A549 (cell line): ENCODE measurements at regions of chr2 and their contacts with region 1.

Region 1: GRCh38 chr2:46125798-46126197 is 171.4 kb upstream of the EPAS1 start:
- DNase-seq: no peak
- ATAC-seq: no peak
- H3K4me3 ChIP-seq: no peak overlapping the region
- H3K27ac ChIP-seq: peak overlapping the region in 1 of 2 experiments; percentile 15; a peak in 2 of 6 replicates
- H3K4me1 ChIP-seq: peaks cover 26% of the 10 kb centered on the region
- CTCF ChIP-seq: no peak
- EP300 ChIP-seq: no peak
- POLR2A ChIP-seq: no peak
- RAD21 ChIP-seq: no peak

Region 2: DNA sequence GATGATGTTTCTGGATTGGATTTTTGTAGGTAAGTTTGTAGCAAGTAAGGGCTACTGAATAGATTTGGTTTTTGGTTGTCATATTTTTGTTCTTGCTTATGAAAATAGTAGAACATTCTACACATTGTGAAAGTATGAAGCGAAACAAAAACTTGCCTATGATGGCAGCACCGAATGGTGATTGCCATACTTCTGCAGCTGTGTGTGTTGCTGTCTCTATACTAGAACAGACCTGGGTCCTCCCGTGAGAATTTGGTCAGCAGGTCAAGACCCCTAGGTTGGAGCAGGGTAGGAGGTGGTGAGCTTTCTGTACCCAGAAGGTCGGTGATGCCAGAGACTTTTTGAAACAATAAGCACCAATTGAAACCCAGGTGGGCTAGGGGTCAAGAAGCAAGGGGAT is 151.7 kb before region 1 on chr2:
- CTCF ChIA-PET with region 1: no interaction called
- POLR2A ChIA-PET with region 1: no interaction called
- DNase-seq: no peak
- ATAC-seq: no peak
- H3K4me3 ChIP-seq: no peak overlapping the region
- H3K27ac ChIP-seq: no peak overlapping the region
- H3K4me1 ChIP-seq: no peaks in the 10 kb centered on the region
- CTCF ChIP-seq: no peak
- EP300 ChIP-seq: no peak
- POLR2A ChIP-seq: no peak
- RAD21 ChIP-seq: no peak

Region 3: GRCh38 chr2:46142546-46143428 is 17.0 kb after region 1 on chr2:
- CTCF ChIA-PET with region 1: interaction called, 16 read pairs
- POLR2A ChIA-PET with region 1: no interaction called
- DNase-seq: peak in 1 of 2 experiments; percentile 31
- ATAC-seq: peak; percentile 65 to 83; a peak in 5 of 6 replicates
- H3K4me3 ChIP-seq: no peak overlapping the region
- H3K27ac ChIP-seq: peak overlapping the region; percentile 49 to 82
- H3K4me1 ChIP-seq: peaks cover 32% of the 10 kb centered on the region
- CTCF ChIP-seq: no peak
- EP300 ChIP-seq: no peak
- POLR2A ChIP-seq: no peak
- RAD21 ChIP-seq: no peak

Region 4: DNA sequence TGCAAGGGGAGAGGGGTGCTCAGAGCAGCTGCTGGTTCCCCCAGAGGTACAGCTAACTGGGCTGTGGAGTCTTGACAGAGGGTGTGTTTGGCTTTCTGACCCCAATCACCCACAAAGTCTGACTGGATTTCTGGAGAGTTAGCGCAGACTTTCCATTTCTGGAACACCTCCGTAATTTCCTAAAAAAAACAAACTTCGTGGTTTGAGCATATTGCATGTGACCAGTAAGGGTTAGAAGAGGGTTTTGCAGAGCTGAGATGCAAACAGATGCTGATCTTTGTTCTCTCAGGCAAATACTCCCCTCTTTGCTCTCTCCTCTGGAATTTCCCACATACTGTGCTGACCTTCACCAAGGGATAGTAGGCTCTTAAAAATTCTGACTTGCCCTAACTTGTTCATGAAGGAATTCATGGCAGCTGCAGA is 309.1 kb after region 1 on chr2:
- CTCF ChIA-PET with region 1: no interaction called
- POLR2A ChIA-PET with region 1: no interaction called
- DNase-seq: no peak
- ATAC-seq: no peak
- H3K4me3 ChIP-seq: no peak overlapping the region
- H3K27ac ChIP-seq: peak overlapping the region in 1 of 2 experiments; percentile 26; a peak in 2 of 6 replicates
- H3K4me1 ChIP-seq: no peaks in the 10 kb centered on the region; the same call in 2 of the 3 replicates
- CTCF ChIP-seq: no peak
- EP300 ChIP-seq: no peak
- POLR2A ChIP-seq: no peak
- RAD21 ChIP-seq: no peak